PC-3 (cell line): ENCODE measurements at regions of chr3 and their contacts with region 1.

Region 1: GRCh38 chr3:60582288-60582687 is 669.0 kb downstream of the FHIT start:
- DNase-seq: peak; percentile 56
- ATAC-seq: no peak
- H3K4me3 ChIP-seq: no peak overlapping the region
- H3K27ac ChIP-seq: no peak overlapping the region
- H3K4me1 ChIP-seq: peaks cover 8% of the 10 kb centered on the region; the same call in 1 of the 2 replicates
- H3K27me3 ChIP-seq: no peaks in the 10 kb centered on the region
- CTCF ChIP-seq: peak; percentile 62

Region 2: GRCh38 chr3:60490992-60491391 is 91.3 kb before region 1 on chr3:
- CTCF ChIA-PET with region 1: no interaction called
- POLR2A ChIA-PET with region 1: no interaction called
- intact Hi-C with region 1: no loop called
- DNase-seq: peak; percentile 19
- ATAC-seq: peak; percentile 83
- H3K4me3 ChIP-seq: no peak overlapping the region
- H3K27ac ChIP-seq: no peak overlapping the region
- H3K4me1 ChIP-seq: no peaks in the 10 kb centered on the region
- H3K27me3 ChIP-seq: no peaks in the 10 kb centered on the region
- CTCF ChIP-seq: no peak

Region 3: DNA sequence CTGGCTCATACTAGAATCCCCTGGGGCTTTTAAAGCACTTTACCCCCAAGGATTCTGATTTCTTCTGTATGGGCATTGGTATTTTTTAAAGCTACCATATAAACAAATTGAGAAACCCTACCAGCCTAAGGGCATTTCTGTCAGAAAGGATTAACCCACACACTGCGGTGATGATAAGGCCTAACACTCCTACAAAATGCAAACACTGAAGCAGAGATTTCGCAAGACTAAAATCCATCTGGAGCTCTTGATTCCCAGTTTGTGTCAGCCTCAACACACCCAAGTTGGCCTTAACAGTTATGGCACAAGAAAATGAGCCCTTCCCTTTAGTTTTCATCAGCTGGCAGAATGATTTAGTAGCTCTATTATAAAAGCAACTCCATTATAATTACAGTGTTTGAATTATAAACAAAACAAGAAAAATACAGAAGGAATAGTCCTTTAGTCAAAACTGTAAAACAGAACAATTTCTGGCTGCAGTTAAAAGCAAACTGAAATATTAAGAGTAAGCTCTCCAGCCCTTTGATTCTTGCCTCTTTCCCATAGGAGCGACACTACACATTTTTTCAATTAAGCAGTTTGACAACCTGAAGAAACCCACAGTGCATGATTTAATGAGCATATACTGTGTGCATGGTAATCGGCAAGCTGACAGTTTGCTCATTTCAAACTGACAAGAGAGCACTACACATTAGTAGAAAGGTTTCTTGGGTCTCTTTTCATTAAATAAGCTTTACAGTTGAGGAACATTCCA is 227.7 kb after region 1 on chr3:
- CTCF ChIA-PET with region 1: no interaction called
- POLR2A ChIA-PET with region 1: no interaction called
- intact Hi-C with region 1: no loop called
- DNase-seq: peak; percentile 73
- ATAC-seq: no peak
- H3K4me3 ChIP-seq: no peak overlapping the region
- H3K27ac ChIP-seq: no peak overlapping the region
- H3K4me1 ChIP-seq: no peaks in the 10 kb centered on the region; the same call in 1 of the 2 replicates
- H3K27me3 ChIP-seq: no peaks in the 10 kb centered on the region
- CTCF ChIP-seq: no peak

Region 4: DNA sequence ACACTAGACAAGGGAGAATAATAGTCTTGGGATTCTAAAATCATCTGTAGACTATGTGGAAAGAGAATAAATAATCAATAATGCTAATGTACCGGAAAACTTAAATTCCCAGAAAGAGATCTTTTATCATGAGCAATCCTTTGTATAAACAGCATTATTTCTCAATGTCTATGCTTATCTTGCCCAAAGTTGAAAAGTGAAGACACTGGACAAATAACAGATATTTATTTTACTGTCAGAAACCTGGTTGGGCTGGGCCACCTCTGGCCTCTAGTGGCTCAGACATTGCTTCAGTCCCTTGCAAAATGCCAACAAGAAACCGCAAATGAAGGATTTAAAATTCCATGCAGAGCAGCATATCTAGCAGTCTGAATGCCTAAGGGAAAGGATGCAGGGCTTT is 259.1 kb after region 1 on chr3:
- CTCF ChIA-PET with region 1: no interaction called
- POLR2A ChIA-PET with region 1: no interaction called
- intact Hi-C with region 1: loop called (anchors 10 kb)
- DNase-seq: peak; percentile 89
- ATAC-seq: peak; percentile 93
- H3K4me3 ChIP-seq: no peak overlapping the region
- H3K27ac ChIP-seq: no peak overlapping the region
- H3K4me1 ChIP-seq: peaks cover 14% of the 10 kb centered on the region
- H3K27me3 ChIP-seq: no peaks in the 10 kb centered on the region
- CTCF ChIP-seq: peak; percentile 16; the same call in 1 of the 2 replicates

Region 5: GRCh38 chr3:60948484-60948883 is 366.2 kb after region 1 on chr3:
- CTCF ChIA-PET with region 1: no interaction called
- POLR2A ChIA-PET with region 1: no interaction called
- intact Hi-C with region 1: loop called (anchors 1 kb)
- DNase-seq: peak; percentile 64
- ATAC-seq: peak; percentile 73
- H3K4me3 ChIP-seq: no peak overlapping the region
- H3K27ac ChIP-seq: no peak overlapping the region
- H3K4me1 ChIP-seq: peaks cover 6% of the 10 kb centered on the region
- H3K27me3 ChIP-seq: no peaks in the 10 kb centered on the region
- CTCF ChIP-seq: peak; percentile 69

Region 6: GRCh38 chr3:61299343-61300005 is 717.2 kb after region 1 on chr3:
- CTCF ChIA-PET with region 1: no interaction called
- POLR2A ChIA-PET with region 1: no interaction called
- intact Hi-C with region 1: loop called (anchors 10 kb)
- DNase-seq: no peak
- ATAC-seq: no peak
- H3K4me3 ChIP-seq: no peak overlapping the region
- H3K27ac ChIP-seq: no peak overlapping the region
- H3K4me1 ChIP-seq: no peaks in the 10 kb centered on the region
- H3K27me3 ChIP-seq: peaks cover 26% of the 10 kb centered on the region
- CTCF ChIP-seq: no peak